ENCODE measurements at regions of chr17 and their contacts with region 1.

Region 1: GRCh38 chr17:63425482-63425881 is 20.6 kb downstream of the CYB561 start:
- DNase-seq: peak in 1 of 2 donors; percentile 90
- H3K4me3 ChIP-seq: no peak overlapping the region
- H3K27ac ChIP-seq: no peak overlapping the region
- H3K4me1 ChIP-seq: no peaks in the 10 kb centered on the region
- H3K27me3 ChIP-seq: no peaks in the 10 kb centered on the region
- CTCF ChIP-seq: peak; percentile 94 to 97 (median 95)
- POLR2A ChIP-seq: no peak

Region 2: DNA sequence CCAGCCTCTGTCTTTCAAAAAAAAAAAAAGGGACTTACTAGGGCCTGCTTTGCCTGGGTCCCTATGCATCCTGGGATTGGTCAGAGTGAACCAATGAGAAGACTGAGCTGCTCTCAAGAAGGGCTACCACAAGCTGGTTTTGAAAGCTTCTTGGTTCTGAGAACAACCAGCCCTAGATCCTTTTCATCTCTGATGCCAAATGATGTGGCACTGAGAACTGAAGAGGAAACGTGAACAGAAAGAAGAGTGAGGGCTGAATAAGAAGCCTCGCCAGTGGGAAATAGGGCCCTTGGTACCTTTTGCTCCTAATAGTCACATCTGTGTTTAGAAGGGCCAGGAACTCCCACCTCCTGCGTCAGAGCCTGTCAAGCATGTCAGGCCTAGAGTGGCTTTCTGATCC is 185.9 kb after region 1 on chr17:
- intact Hi-C with region 1: loop called (anchors 5 kb)
- DNase-seq: no peak
- H3K4me3 ChIP-seq: no peak overlapping the region
- H3K27ac ChIP-seq: no peak overlapping the region
- H3K4me1 ChIP-seq: no peaks in the 10 kb centered on the region
- H3K27me3 ChIP-seq: no peaks in the 10 kb centered on the region
- CTCF ChIP-seq: no peak
- POLR2A ChIP-seq: no peak

Measured in vagina (tissue), 2 donors.